ENCODE measurements at regions of chr3 and their contacts with region 1.

Region 1: GRCh38 chr3:72818092-72818773 is 30.0 kb downstream of the SHQ1 start:
- DNase-seq: no peak
- H3K4me3 ChIP-seq: no peak overlapping the region
- H3K27ac ChIP-seq: no peak overlapping the region
- H3K4me1 ChIP-seq: peaks cover 25% of the 10 kb centered on the region
- H3K27me3 ChIP-seq: no peaks in the 10 kb centered on the region
- CTCF ChIP-seq: peak; percentile 4 to 37 (median 35)
- POLR2A ChIP-seq: no peak

Region 2: DNA sequence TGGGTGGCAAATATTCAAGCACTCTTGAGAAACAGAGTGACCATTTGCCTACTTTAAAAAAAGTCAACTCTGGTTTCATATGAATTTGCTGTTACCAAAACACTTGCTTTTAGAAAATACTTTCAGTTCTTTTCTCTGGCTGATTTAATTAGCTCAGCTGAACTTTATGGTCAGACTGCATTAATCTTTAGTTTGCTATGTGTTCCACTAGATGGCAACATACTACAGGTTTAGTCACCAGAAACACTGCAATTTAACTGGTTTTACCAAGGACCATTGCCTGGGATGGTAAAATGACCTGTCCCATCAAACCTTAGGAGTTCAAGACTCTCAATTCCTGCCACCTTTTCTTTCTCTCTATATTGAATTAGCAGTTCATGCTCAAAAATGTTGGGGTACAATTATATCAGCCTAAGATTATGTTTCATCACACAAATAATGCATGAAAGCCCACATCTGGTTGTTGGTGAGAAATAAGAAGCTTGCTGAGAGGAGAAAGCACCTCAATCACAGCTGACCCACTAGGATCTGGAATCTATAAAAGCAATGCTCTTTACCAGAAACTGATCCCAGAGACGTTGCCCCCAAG is 1107.2 kb before region 1 on chr3:
- intact Hi-C with region 1: loop called (anchors 10 kb)
- DNase-seq: no peak
- H3K4me3 ChIP-seq: no peak overlapping the region
- H3K27ac ChIP-seq: no peak overlapping the region
- H3K4me1 ChIP-seq: peaks cover 4% of the 10 kb centered on the region
- H3K27me3 ChIP-seq: no peaks in the 10 kb centered on the region
- CTCF ChIP-seq: peak; percentile 42 to 51 (median 45)
- POLR2A ChIP-seq: no peak

Region 3: GRCh38 chr3:71875461-71875947 is 942.7 kb before region 1 on chr3:
- intact Hi-C with region 1: loop called (anchors 5 kb)
- DNase-seq: peak in 1 of 2 donors; percentile 86
- H3K4me3 ChIP-seq: no peak overlapping the region
- H3K27ac ChIP-seq: no peak overlapping the region
- H3K4me1 ChIP-seq: no peaks in the 10 kb centered on the region
- H3K27me3 ChIP-seq: no peaks in the 10 kb centered on the region
- CTCF ChIP-seq: peak; percentile 68 to 85 (median 78)
- POLR2A ChIP-seq: no peak

Region 4: DNA sequence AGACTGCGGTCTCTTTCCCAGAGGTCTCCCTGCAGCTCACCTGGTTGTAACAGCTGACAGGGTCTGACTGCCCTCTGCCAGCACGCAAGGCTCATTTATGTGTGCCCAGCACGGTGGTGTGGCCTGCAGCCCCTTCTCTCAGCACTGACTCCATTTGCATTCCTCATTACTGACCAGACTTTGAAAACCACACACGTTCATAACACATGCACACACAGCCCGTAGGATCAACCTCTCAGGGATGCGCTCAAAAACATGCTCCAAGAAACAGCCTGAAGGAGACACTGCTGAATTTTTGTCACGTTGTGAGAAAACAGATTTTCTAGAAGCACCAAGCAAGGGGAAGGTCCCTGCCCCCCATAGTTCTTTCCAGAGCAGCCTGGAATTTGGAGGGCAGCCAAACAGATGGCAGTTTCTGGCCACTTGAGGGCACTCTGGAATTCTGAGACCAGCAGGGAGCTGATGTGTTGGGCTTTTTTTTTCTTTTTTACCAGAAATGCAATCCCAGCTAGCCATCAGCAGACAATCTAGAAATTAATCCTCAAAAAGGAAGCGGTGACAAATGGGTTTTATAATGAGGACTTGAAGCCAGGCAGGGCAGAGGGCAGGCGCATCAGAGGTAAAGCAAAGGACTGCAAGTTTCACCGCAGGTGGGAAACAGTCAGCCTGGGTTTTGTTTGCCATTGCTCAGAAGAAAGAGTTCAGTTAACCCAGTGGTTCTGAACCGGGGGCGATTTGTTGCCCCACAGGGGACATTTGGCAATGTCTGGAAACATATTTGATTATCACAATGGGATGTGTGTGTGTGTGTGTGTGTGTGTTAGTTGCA is 862.8 kb before region 1 on chr3:
- intact Hi-C with region 1: loop called (anchors 5 kb)
- DNase-seq: no peak
- H3K4me3 ChIP-seq: no peak overlapping the region
- H3K27ac ChIP-seq: no peak overlapping the region
- H3K4me1 ChIP-seq: no peaks in the 10 kb centered on the region
- H3K27me3 ChIP-seq: no peaks in the 10 kb centered on the region
- CTCF ChIP-seq: peak in 2 of 3 experiments; percentile 68 to 75
- POLR2A ChIP-seq: no peak

Region 5: DNA sequence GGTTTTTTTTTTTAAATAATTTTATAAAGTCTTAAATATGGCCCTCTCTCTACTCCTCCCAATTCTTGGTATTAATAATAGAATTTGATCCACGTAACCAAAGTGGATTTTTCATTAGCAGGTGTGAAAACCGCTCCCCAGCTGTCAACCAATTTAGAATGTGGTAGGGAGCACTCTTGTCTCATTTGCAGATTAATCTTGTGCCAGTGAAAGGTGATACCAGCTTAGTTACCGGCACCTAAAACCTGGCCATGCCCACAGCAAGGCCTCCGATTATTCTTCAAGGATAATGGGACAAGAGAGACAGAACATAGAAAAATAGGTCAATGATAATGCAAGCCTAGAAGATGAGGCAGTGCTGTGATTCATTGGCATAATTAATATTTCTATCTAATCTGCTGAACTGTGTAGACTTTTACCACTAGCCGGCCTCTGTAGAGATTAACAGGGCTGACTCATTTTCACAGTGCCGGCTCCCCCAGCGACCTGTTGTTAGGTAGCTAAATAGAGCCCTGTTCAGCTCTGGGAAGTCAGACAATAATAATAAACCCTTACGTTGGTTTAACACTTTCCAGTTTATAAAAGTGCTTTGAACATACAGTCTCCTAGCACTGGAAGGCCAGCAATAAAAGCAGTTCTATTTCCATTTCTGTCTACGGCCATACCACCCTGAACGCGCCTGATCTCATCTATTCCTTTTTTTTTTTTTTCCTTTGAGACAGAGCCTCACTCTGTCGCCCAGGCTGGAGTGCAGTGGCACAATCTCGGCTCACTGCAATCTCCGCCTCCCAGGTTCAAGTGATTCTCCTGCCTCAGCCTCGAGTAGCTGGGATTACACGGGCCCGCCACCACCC is 72.9 kb before region 1 on chr3:
- intact Hi-C with region 1: no loop called
- DNase-seq: no peak
- H3K4me3 ChIP-seq: no peak overlapping the region
- H3K27ac ChIP-seq: no peak overlapping the region
- H3K4me1 ChIP-seq: no peaks in the 10 kb centered on the region
- H3K27me3 ChIP-seq: no peaks in the 10 kb centered on the region
- CTCF ChIP-seq: no peak
- POLR2A ChIP-seq: no peak

Region 6: GRCh38 chr3:72996473-72997333 is 178.5 kb after region 1 on chr3 and contains the start of gene PPP4R2:
- intact Hi-C with region 1: no loop called
- DNase-seq: peak in 1 of 2 donors; percentile 91
- H3K4me3 ChIP-seq: peak within 1 kb of the TSS; percentile 69 to 78
- H3K27ac ChIP-seq: peak within 1 kb of the TSS; percentile 97
- H3K4me1 ChIP-seq: peaks cover 49% of the 10 kb centered on the region
- H3K27me3 ChIP-seq: no peaks in the 10 kb centered on the region
- CTCF ChIP-seq: peak in 1 of 3 experiments; percentile 3
- POLR2A ChIP-seq: peak; percentile 21 to 92
- total RNA-seq, gene PPP4R2: 24.3 TPM